Mammary epithelial cell (primary cell): ENCODE measurements at regions of chr13 and their contacts with region 1.

Region 1: GRCh38 chr13:24053519-24054251 is 106.8 kb upstream of the SPATA13 start:
- DNase-seq: peak; percentile 74
- H3K4me3 ChIP-seq: no peak overlapping the region
- H3K27ac ChIP-seq: no peak overlapping the region
- H3K4me1 ChIP-seq: peaks cover 11% of the 10 kb centered on the region
- H3K27me3 ChIP-seq: no peaks in the 10 kb centered on the region
- CTCF ChIP-seq: peak; percentile 62 to 86

Region 2: DNA sequence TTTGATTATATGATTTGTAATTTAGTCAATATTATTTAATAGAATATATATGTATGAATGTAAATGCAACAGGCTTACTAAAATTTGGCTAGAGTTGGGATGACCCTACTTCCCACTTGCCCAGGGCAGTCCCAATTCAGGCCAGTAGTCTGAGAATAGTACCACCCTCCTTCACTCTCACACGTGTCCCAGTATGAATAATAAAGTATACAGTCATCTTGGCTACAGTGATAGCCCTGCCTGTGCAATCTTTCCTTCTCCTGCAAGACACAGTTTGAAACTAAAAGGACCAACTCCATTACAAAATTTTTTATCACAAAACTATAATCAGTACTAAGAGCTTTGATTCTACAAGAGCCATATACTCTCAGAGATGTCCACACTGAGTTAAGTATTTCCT is 696.3 kb before region 1 on chr13:
- CTCF ChIA-PET with region 1: no interaction called
- dilution Hi-C with region 1: no loop called
- in situ Hi-C with region 1: no loop called
- intact Hi-C with region 1: no loop called
- DNase-seq: no peak
- H3K4me3 ChIP-seq: no peak overlapping the region
- H3K27ac ChIP-seq: no peak overlapping the region
- H3K4me1 ChIP-seq: no peaks in the 10 kb centered on the region
- H3K27me3 ChIP-seq: no peaks in the 10 kb centered on the region
- CTCF ChIP-seq: no peak

Region 3: GRCh38 chr13:23921451-23921888 is 132.2 kb before region 1 on chr13:
- CTCF ChIA-PET with region 1: no interaction called
- dilution Hi-C with region 1: no loop called
- in situ Hi-C with region 1: no loop called
- intact Hi-C with region 1: loop called (anchors 1 kb)
- DNase-seq: peak; percentile 55
- H3K4me3 ChIP-seq: no peak overlapping the region
- H3K27ac ChIP-seq: no peak overlapping the region
- H3K4me1 ChIP-seq: peaks cover 4% of the 10 kb centered on the region
- H3K27me3 ChIP-seq: no peaks in the 10 kb centered on the region
- CTCF ChIP-seq: peak; percentile 55 to 73

Region 4: DNA sequence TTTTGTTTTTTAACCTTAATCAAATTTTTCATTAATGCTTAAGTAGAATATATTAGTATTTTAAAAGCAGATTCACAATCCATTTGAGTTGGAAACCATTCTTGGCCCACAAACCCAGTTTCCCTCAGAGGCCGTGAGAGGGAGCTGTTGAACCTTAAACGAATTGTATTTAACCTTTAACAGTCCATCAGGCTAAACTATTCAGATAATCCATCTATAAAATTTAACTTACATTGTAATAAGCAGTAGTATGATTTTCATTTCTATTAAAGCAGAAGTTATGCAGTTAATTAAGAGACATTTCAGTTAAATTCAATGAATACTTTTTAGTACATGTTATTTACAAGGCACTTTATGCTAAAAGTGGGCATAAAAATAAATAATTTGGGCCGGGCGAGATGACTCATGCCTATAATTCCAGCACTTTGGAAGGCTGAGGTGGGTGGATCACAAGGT is 33.3 kb before region 1 on chr13:
- CTCF ChIA-PET with region 1: no interaction called
- dilution Hi-C with region 1: no loop called
- in situ Hi-C with region 1: no loop called
- intact Hi-C with region 1: loop called (anchors 2 kb)
- DNase-seq: peak; percentile 29
- H3K4me3 ChIP-seq: no peak overlapping the region
- H3K27ac ChIP-seq: no peak overlapping the region
- H3K4me1 ChIP-seq: no peaks in the 10 kb centered on the region
- H3K27me3 ChIP-seq: no peaks in the 10 kb centered on the region
- CTCF ChIP-seq: peak; percentile 71 to 79

Region 5: GRCh38 chr13:24027494-24027893 is 26.2 kb before region 1 on chr13:
- CTCF ChIA-PET with region 1: no interaction called
- dilution Hi-C with region 1: no loop called
- in situ Hi-C with region 1: no loop called
- intact Hi-C with region 1: loop called (anchors 1 kb)
- DNase-seq: no peak
- H3K4me3 ChIP-seq: no peak overlapping the region
- H3K27ac ChIP-seq: no peak overlapping the region
- H3K4me1 ChIP-seq: no peaks in the 10 kb centered on the region
- H3K27me3 ChIP-seq: no peaks in the 10 kb centered on the region
- CTCF ChIP-seq: no peak

Region 6: DNA sequence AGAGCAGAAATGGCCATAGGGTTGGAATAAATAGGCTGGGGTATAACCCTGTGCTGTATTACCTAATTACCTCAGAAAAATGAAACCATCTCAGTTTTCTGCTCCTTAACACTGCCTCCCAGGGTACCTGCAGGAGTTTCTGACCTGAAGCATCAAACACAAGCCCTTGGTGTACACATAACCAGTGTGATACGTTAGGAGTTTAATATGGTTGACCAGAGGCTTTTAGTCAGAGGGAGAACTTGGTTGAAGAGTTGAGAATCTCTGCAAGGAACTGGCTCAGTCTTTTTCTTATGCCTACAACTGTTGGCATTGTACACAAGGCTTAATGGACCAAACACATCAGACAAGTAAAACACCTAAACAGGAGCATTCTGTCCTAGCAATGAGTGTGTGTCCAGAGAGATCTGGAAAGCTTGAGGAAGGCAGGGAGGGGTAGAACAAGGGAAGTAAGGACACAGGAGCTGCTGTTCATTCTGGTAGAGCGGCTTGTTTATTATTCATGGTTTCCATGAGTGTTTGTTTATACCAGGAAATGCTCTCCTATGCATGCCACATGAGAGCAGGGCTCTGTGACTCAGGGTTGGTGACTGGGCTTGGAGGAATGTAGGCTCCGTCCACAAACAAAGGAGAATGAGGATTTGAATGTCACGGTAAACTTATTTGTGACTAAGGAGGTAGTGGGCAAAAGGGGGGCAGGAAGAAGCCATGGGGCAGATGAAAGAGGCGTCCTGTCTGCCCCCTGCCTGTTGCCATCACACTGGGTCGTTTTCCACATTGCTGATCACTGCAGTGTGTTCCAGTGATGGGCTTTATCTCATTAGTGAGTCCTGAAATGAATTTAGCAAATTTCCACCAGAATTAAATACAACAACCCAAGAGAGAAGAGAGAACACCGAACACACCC is 95.0 kb after region 1 on chr13:
- CTCF ChIA-PET with region 1: interaction called, 7 read pairs
- dilution Hi-C with region 1: no loop called
- in situ Hi-C with region 1: no loop called
- intact Hi-C with region 1: loop called (anchors 10 kb)
- DNase-seq: peak; percentile 90
- H3K4me3 ChIP-seq: no peak overlapping the region
- H3K27ac ChIP-seq: peak overlapping the region; percentile 33
- H3K4me1 ChIP-seq: peaks cover 12% of the 10 kb centered on the region
- H3K27me3 ChIP-seq: no peaks in the 10 kb centered on the region
- CTCF ChIP-seq: no peak